ENCODE measurements at regions of chr5 and their contacts with region 1.

Region 1: DNA sequence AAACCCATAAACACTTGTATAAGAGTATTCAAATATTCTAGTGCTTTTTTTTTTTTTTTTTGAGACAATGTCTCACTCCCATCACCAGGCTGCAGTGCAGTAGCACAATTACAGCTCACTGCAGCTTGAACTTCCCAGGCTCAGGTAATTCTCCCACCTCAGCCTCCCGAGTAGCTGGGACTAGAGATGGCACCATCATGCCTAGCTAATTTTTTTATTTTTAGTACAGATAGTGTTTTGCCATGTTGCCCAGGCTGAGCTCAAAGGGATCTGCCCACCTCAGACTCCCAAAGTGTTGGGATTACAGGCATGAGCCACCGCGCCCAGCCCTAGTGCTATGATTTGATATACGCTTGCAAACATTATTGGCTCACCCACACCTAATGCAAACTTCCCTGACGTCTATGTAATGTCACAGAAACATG is 11.8 kb downstream of the IL6ST start:
- DNase-seq: peak; percentile 25
- ATAC-seq: peak; percentile 22
- H3K4me3 Mint-ChIP-seq: peak overlapping the region; percentile 4
- H3K27ac Mint-ChIP-seq: peak overlapping the region; percentile 17
- H3K4me1 Mint-ChIP-seq: peaks cover 63% of the 10 kb centered on the region
- H3K27me3 Mint-ChIP-seq: no peaks in the 10 kb centered on the region
- CTCF ChIP-seq: peak; percentile 34

Region 2: GRCh38 chr5:56200856-56201666 is 218.1 kb after region 1 on chr5:
- CTCF ChIA-PET with region 1: interaction called, 18 read pairs
- POLR2A ChIA-PET with region 1: no interaction called
- intact Hi-C with region 1: loop called (anchors 2 kb)
- DNase-seq: peak; percentile 77
- ATAC-seq: peak; percentile 99
- H3K4me3 Mint-ChIP-seq: no peak overlapping the region
- H3K27ac Mint-ChIP-seq: no peak overlapping the region
- H3K4me1 Mint-ChIP-seq: peaks cover 11% of the 10 kb centered on the region
- H3K27me3 Mint-ChIP-seq: no peaks in the 10 kb centered on the region
- CTCF ChIP-seq: peak; percentile 83